Motor neuron (in vitro differentiated cells): ENCODE measurements at regions of chrX and their contacts with region 1.

Region 1: DNA sequence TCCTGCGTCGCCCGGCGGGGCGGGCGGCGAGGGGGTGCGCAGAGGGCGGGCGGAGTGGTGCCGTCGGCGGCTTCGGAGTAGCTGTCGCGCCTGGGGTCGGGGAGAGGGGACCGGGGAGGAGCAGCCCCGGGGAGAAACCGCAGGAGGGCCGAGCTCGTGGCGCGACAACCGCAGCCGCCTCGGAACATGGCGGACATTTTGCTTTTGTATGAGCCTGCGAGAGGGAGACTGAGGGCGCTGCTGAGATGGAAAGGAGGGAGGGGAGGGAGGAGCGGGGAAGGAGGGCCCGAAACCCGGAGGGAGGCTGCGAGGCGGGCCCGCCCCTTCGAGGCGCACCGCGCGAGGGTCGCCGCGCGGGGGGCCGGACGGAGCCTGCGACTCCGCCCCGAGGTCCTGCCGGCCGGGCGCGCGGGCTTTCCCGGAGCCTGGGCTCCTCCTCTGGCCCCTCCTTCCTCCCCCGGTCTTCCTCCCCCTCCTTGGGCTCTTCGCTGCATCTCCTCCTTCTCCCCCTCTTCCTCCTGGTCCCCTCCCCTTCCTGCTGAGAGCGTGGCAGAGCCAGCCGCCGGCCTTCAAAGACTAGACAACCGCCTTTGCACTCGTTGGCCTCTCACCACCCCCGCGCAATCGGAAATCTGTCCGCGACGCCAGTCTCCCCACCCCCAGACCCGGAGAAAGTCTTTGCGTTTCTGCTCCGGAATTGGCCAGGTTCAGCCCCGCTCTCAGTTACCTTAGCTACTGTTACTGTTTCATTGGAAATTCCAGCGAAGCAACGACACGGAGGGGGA is 1.1 kb downstream of the INTS6L start:
- ATAC-seq: peak; percentile 64 to 83 (median 78)
- H3K4me3 ChIP-seq: peak overlapping the region; percentile 48 to 87 (median 75)
- H3K27ac ChIP-seq: peak overlapping the region; percentile 95 to 96
- H3K4me1 ChIP-seq: peaks cover 3 to 15% of the 10 kb centered on the region in 2 donors

Region 2: GRCh38 chrX:135213200-135213844 is 308.3 kb before region 1 on chrX:
- in situ Hi-C with region 1: no loop called
- ATAC-seq: no peak
- H3K4me3 ChIP-seq: no peak overlapping the region
- H3K27ac ChIP-seq: no peak overlapping the region
- H3K4me1 ChIP-seq: no peaks in the 10 kb centered on the region

Region 3: DNA sequence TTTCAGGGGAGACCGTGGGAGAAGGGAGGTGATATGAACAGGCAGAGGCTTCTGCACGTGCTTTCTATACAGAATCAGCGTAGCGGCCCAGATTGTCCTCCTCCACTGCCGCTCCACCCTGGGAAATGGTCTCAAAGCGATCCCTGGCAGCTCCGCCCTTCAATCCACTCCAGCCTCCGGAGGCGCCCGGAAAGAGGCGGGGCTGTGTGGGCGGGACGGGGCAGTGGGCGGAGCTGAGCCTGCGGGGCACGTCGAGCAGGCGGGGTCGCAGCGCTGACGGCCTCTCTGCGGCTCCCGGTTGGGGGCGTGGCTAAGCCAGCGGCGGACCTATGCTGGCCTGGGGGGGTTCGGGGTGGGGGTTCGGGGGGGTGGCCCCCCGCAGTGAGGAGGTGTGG is 100.1 kb before region 1 on chrX:
- in situ Hi-C with region 1: loop called in 1 of 9 experiments (anchors 25 kb)
- ATAC-seq: peak; percentile 73 to 94 (median 86)
- H3K4me3 ChIP-seq: peak overlapping the region; percentile 44 to 56 (median 51)
- H3K27ac ChIP-seq: no peak overlapping the region
- H3K4me1 ChIP-seq: peaks cover 9 to 17% of the 10 kb centered on the region in 2 donors

Region 4: DNA sequence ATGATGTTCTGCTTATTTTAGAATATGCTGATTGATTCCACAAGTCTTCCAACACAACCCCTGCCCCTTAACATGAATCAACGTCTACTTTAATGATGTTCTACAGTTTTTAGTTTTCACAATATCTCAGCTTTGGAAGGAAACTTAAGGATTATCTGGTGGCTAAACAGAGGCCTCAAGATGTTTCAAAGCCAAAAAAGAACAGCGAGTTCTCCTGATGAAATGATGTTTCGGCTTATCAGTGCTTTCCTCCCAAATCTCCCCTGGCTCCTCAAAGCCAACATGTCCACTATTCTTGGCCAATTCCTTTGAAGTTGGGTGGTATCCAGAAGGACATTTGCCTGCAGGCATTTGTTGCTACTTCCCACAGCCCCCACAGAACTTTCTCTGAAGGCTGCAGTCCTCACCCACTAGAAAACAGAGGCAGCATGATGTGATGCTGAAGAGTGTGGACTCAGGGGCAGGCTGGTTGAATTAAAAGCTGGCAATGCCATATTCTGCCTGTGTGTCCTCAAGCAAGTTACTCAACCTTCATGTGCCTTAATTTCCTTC is 866.4 kb after region 1 on chrX:
- in situ Hi-C with region 1: no loop called
- ATAC-seq: no peak
- H3K4me3 ChIP-seq: no peak overlapping the region
- H3K27ac ChIP-seq: no peak overlapping the region
- H3K4me1 ChIP-seq: no peaks in the 10 kb centered on the region